ENCODE measurements at regions of chr15 and their contacts with region 1.

Region 1: GRCh38 chr15:72783563-72784237 is at the start of gene ADPGK:
- DNase-seq: peak; percentile 91 to 95
- ATAC-seq: peak; percentile 92 to 98 (median 96)
- H3K4me3 ChIP-seq: peak within 1 kb of the TSS; percentile 91
- H3K27ac ChIP-seq: peak within 1 kb of the TSS; percentile 95
- H3K4me1 ChIP-seq: peaks cover 31% of the 10 kb centered on the region
- H3K27me3 ChIP-seq: no peaks in the 10 kb centered on the region
- CTCF ChIP-seq: no peak
- total RNA-seq, gene ADPGK: 7.9 to 13.6 (median 10.5) TPM

Region 2: DNA sequence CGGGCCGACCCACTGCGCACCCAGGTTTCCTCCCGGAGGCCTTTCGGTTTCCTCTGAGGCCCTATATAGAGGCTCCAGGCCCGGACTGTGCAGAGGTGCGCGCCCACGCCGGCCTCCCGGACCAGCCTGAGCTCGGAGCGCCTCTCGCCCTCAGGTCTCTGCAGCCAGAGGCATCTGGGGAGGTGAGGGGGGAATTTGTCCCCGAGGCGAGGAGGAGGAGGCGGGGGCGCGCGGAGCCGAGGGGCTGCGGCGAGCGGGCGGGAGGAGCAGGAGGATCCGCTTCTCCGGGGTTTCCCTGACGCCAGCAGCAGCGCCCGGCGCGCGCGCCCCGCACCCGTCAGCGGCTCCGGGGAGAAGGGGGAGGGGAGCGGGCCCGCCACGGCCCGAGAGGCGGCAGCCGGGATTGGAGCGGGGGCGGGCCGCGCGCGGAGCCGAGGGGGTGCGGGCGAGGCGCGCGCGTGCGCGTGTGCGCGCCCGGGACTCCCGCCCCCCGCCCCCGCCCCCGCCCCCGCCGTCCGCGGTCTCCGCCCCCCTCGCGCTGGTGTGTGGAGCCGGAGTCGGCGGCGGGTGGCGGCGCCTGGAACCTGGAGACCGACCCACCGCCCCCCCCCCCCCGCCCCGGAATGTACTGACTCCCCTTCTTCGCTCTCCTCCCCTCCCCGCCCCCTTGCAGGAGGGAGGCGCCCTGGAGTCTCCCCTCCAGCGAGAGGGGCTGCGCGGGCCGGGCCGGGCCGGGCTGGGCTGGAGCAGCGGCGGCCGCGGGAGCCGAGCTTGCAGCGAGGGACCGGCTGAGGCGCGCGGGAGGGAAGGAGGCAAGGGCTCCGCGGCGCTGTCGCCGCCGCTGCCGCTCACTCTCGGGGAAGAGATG is 268.3 kb after region 1 on chr15 and contains the start of gene NEO1:
- intact Hi-C with region 1: loop called in 1 of 2 experiments (anchors 10 kb)
- DNase-seq: peak; percentile 89 to 95
- ATAC-seq: peak; percentile 91 to 95 (median 94)
- H3K4me3 ChIP-seq: peak within 1 kb of the TSS; percentile 79
- H3K27ac ChIP-seq: peak within 1 kb of the TSS; percentile 90
- H3K4me1 ChIP-seq: peaks cover 52% of the 10 kb centered on the region
- H3K27me3 ChIP-seq: no peaks in the 10 kb centered on the region
- CTCF ChIP-seq: no peak
- total RNA-seq, gene NEO1: 22.5 to 33.3 (median 26.0) TPM

Region 3: DNA sequence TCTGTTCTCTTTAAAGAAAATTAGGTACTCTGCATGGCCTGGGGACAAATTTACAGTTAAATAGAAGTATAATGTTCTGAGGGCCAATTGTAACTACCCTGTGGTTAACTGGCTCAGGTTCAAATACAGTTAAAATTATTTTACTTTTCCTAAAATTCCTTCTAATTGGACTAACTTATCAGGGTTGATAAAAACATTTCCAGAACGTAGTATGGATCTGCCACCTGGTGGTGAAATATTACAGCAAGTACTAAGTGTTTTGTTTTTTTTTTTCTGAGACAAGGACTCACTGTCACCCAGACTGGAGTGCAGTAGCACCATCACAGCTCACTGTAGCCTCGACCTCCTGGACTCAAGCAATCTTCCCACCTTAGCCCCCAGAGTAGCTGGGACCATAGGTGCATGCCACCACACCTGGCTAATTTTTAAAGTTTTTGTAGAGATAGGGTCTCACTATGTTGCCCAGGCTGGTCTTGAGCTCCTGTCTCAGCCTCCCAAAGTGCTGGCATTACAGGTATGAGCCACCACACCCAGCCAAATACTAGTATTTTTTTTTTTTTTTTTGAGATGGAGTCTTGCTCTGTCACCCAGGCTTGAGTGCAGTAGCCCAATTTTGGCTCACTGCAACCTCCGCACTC is 297.7 kb after region 1 on chr15:
- intact Hi-C with region 1: loop called in 1 of 2 experiments (anchors 5 kb)
- DNase-seq: peak in 1 of 2 donors; percentile 8
- ATAC-seq: peak; percentile 51 to 84 (median 76)
- H3K4me3 ChIP-seq: no peak overlapping the region
- H3K27ac ChIP-seq: no peak overlapping the region
- H3K4me1 ChIP-seq: peaks cover 33% of the 10 kb centered on the region
- H3K27me3 ChIP-seq: no peaks in the 10 kb centered on the region
- CTCF ChIP-seq: peak; percentile 76

Region 4: DNA sequence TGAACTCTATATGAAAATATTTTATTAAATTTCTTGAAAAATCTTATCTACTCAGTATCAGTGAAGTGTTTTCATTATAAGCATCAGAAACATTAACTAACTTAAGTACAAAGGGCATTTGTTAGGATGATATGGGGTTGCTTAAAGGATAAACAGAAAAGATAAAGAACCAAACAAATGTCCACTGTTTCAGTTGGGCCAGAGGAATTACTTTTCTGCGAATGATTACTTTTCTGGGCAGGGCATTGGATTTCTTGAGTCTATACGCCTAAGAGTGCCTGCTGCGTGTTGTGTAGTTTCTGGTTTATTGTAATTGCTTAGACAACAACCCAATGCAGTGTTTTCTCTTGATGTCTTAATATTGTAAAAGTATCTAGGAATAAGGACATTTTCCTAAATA is 321.4 kb after region 1 on chr15:
- intact Hi-C with region 1: no loop called
- DNase-seq: no peak
- ATAC-seq: no peak
- H3K4me3 ChIP-seq: no peak overlapping the region
- H3K27ac ChIP-seq: no peak overlapping the region
- H3K4me1 ChIP-seq: peaks cover 12% of the 10 kb centered on the region
- H3K27me3 ChIP-seq: no peaks in the 10 kb centered on the region
- CTCF ChIP-seq: no peak

Region 5: GRCh38 chr15:73240866-73241499 is 457.3 kb after region 1 on chr15:
- intact Hi-C with region 1: loop called (anchors 10 kb)
- DNase-seq: peak; percentile 47 to 64
- ATAC-seq: peak; percentile 58 to 85 (median 70)
- H3K4me3 ChIP-seq: no peak overlapping the region
- H3K27ac ChIP-seq: no peak overlapping the region
- H3K4me1 ChIP-seq: no peaks in the 10 kb centered on the region
- H3K27me3 ChIP-seq: no peaks in the 10 kb centered on the region
- CTCF ChIP-seq: peak; percentile 91

Measured in psoas muscle (tissue), 8 donors.